Activated CD8-positive, alpha-beta T cell treated with anti-CD3 and anti-CD28 coated beads for 36 hours (primary cell): ENCODE measurements at regions of chr1 and their contacts with region 1.

Region 1: DNA sequence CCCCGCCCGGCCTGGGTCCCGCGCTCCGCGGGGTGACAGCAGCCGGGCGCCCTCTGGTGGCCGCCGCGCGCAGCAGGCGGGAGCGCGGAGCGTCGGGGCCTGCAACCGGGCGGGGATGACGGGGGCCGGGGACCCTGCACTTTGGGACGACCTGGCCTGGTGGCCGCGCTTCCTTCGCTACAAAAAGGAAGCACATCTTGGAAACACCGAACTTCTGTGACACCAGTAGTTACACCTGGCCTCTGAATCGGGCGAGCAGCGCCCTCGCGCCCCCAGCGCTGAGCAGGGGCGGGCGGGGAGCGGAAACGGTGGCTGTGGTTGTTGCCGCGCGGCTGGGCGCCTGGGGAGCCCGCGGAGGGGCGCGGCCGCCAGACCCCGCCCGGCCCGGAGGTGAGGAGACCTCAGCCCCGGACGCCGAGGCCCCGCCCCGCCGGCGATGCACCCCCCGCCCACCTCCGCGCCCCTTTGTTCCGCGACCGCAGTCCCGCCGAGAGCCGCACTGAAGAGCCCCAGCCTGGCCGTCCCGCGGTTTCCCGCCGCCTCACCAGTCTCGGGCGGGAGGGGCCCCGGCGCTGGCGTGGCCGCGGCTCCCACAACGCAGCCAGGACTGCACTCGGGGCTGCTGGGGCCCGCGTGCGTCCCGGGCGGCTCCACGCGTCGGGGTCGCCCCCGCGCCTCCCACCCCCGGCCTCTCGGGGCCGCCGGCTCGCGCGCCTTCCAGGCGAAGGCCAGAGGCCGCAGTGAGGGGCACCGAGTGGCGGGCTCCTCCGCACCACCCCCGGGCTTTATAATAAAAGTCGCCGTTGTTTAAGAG is 59.3 kb downstream of the H3-3A start:
- DNase-seq: peak; percentile 71
- ATAC-seq: peak; percentile 74
- H3K4me3 Mint-ChIP-seq: peak overlapping the region; percentile 76
- H3K27ac Mint-ChIP-seq: peak overlapping the region; percentile 88
- H3K4me1 Mint-ChIP-seq: peaks cover 25% of the 10 kb centered on the region
- H3K27me3 Mint-ChIP-seq: no peaks in the 10 kb centered on the region
- CTCF ChIP-seq: peak; percentile 83

Region 2: GRCh38 chr1:225825607-225826007 is 296.2 kb before region 1 on chr1:
- CTCF ChIA-PET with region 1: no interaction called
- POLR2A ChIA-PET with region 1: no interaction called
- intact Hi-C with region 1: no loop called
- DNase-seq: no peak
- ATAC-seq: no peak
- H3K4me3 Mint-ChIP-seq: no peak overlapping the region
- H3K27ac Mint-ChIP-seq: no peak overlapping the region
- H3K4me1 Mint-ChIP-seq: no peaks in the 10 kb centered on the region
- H3K27me3 Mint-ChIP-seq: no peaks in the 10 kb centered on the region
- CTCF ChIP-seq: no peak

Region 3: GRCh38 chr1:225882694-225883615 is 238.8 kb before region 1 on chr1:
- CTCF ChIA-PET with region 1: no interaction called
- POLR2A ChIA-PET with region 1: no interaction called
- intact Hi-C with region 1: no loop called
- DNase-seq: peak; percentile 54
- ATAC-seq: peak; percentile 37
- H3K4me3 Mint-ChIP-seq: peak overlapping the region; percentile 76
- H3K27ac Mint-ChIP-seq: peak overlapping the region; percentile 84
- H3K4me1 Mint-ChIP-seq: peaks cover 42% of the 10 kb centered on the region
- H3K27me3 Mint-ChIP-seq: no peaks in the 10 kb centered on the region
- CTCF ChIP-seq: no peak

Region 4: GRCh38 chr1:226069811-226070489 is 51.8 kb before region 1 on chr1:
- CTCF ChIA-PET with region 1: interaction called, 64 read pairs
- POLR2A ChIA-PET with region 1: interaction called, 13 read pairs
- intact Hi-C with region 1: loop called (anchors 5 kb)
- DNase-seq: peak; percentile 12
- ATAC-seq: peak; percentile 74
- H3K4me3 Mint-ChIP-seq: peak overlapping the region; percentile 29
- H3K27ac Mint-ChIP-seq: peak overlapping the region; percentile 85
- H3K4me1 Mint-ChIP-seq: peaks cover 55% of the 10 kb centered on the region
- H3K27me3 Mint-ChIP-seq: no peaks in the 10 kb centered on the region
- CTCF ChIP-seq: no peak

Region 5: GRCh38 chr1:226135059-226135651 is 13.4 kb after region 1 on chr1:
- CTCF ChIA-PET with region 1: interaction called, 15 read pairs
- POLR2A ChIA-PET with region 1: no interaction called
- intact Hi-C with region 1: no loop called
- DNase-seq: no peak
- ATAC-seq: no peak
- H3K4me3 Mint-ChIP-seq: no peak overlapping the region
- H3K27ac Mint-ChIP-seq: no peak overlapping the region
- H3K4me1 Mint-ChIP-seq: no peaks in the 10 kb centered on the region
- H3K27me3 Mint-ChIP-seq: no peaks in the 10 kb centered on the region
- CTCF ChIP-seq: no peak

Region 6: GRCh38 chr1:226186124-226187018 is 64.6 kb after region 1 on chr1 and contains the start of gene ACBD3:
- CTCF ChIA-PET with region 1: interaction called, 60 read pairs
- POLR2A ChIA-PET with region 1: interaction called, 3 read pairs
- intact Hi-C with region 1: no loop called
- DNase-seq: peak; percentile 91
- ATAC-seq: peak; percentile 98
- H3K4me3 Mint-ChIP-seq: peak within 1 kb of the TSS; percentile 94
- H3K27ac Mint-ChIP-seq: peak within 1 kb of the TSS; percentile 95
- H3K4me1 Mint-ChIP-seq: peaks cover 31% of the 10 kb centered on the region
- H3K27me3 Mint-ChIP-seq: no peaks in the 10 kb centered on the region
- CTCF ChIP-seq: no peak
- total RNA-seq, gene ACBD3: 17.4 to 17.7 TPM

Region 7: GRCh38 chr1:226308723-226309315 is 187.0 kb after region 1 on chr1 and contains the start of gene LIN9:
- CTCF ChIA-PET with region 1: interaction called, 19 read pairs
- POLR2A ChIA-PET with region 1: interaction called, 10 read pairs
- intact Hi-C with region 1: no loop called
- DNase-seq: peak; percentile 96
- ATAC-seq: peak; percentile 91
- H3K4me3 Mint-ChIP-seq: peak within 1 kb of the TSS; percentile 88
- H3K27ac Mint-ChIP-seq: peak within 1 kb of the TSS; percentile 90
- H3K4me1 Mint-ChIP-seq: peaks cover 22% of the 10 kb centered on the region
- H3K27me3 Mint-ChIP-seq: peaks cover 14% of the 10 kb centered on the region
- CTCF ChIP-seq: no peak
- total RNA-seq, gene LIN9: 10.2 to 11.3 TPM

Region 8: DNA sequence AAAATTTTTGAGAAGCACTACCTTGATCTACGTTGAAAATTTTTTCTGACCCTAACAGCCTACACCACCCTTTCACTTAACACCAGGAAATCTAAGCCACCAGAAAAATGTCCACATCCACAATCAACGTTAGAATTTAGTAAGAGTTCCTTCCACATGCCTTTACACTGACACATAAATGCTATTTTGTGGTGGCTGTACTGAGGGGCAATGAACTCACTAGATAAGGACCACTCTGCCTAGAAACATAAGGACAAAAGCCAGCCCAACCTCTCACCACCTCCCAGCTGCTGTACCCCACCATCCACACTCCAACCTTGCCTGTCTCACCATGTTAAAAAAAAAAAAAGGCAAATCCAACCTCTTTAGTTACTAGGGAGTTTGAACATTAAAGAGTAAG is 256.3 kb after region 1 on chr1:
- CTCF ChIA-PET with region 1: no interaction called
- POLR2A ChIA-PET with region 1: no interaction called
- intact Hi-C with region 1: no loop called
- DNase-seq: no peak
- ATAC-seq: no peak
- H3K4me3 Mint-ChIP-seq: no peak overlapping the region
- H3K27ac Mint-ChIP-seq: no peak overlapping the region
- H3K4me1 Mint-ChIP-seq: peaks cover 11% of the 10 kb centered on the region
- H3K27me3 Mint-ChIP-seq: no peaks in the 10 kb centered on the region
- CTCF ChIP-seq: no peak

Region 9: DNA sequence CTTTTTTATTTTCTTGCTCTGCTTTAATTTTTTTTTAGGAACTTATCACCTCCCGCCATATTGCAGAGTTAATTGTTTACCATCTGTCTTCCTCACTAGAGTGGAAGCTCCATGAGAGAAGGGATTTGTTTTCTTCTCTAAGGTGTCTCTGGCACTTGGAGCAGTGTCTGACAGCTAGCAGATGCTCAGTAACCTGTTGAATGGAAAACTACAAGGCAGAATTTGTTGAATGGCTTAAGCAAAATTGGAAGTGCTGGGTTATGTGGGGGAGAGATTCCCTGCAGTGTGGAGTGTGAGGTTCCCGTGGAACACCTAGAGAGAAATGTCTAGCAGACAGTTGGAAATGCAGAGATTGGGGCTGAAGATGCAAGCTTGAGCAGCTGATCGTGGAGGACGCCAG is 345.6 kb after region 1 on chr1:
- CTCF ChIA-PET with region 1: no interaction called
- POLR2A ChIA-PET with region 1: no interaction called
- intact Hi-C with region 1: no loop called
- DNase-seq: no peak
- ATAC-seq: no peak
- H3K4me3 Mint-ChIP-seq: no peak overlapping the region
- H3K27ac Mint-ChIP-seq: no peak overlapping the region
- H3K4me1 Mint-ChIP-seq: no peaks in the 10 kb centered on the region
- H3K27me3 Mint-ChIP-seq: no peaks in the 10 kb centered on the region
- CTCF ChIP-seq: no peak